ENCODE measurements at regions of chr19 and their contacts with region 1.

Region 1: DNA sequence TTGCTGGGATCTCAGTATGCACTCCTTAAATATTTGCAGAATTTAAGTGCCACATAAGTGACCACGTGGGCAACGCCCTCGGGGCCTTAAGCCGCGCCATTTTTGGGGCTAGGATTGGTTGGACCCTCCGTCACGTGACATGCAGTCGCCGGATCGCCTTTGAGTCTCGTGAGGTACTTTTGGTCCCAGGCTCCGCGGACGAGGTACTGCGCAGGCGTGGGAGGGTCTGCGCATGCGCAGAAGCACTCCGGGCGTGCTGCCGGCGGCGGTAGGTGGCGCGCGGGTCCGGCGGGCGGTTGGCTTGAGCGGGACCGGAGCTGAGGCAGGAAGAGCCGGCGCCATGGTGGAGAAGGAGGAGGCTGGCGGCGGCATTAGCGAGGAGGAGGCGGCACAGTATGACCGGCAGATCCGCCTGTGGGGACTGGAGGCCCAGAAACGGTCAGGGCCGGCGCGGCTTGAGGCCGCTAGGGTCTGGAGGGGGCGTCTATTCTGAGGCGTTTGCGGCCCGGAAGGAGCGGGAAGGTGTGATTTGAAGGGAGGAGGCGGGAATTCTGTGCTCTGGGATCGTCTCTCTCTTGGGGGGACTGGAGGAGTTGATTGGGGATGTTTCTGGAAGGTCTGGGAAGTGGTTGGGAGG is at the start of gene SAE1:
- DNase-seq: peak; percentile 93 to 97 (median 93)
- H3K4me3 ChIP-seq: peak within 1 kb of the TSS; percentile 83
- H3K27ac ChIP-seq: peak within 1 kb of the TSS; percentile 73 to 88
- H3K4me1 ChIP-seq: peaks cover 9% of the 10 kb centered on the region
- H3K27me3 ChIP-seq: no peaks in the 10 kb centered on the region
- CTCF ChIP-seq: peak; percentile 24 to 71 (median 71)
- EP300 ChIP-seq: no peak
- POLR2A ChIP-seq: peak; percentile 47
- total RNA-seq, gene SAE1: 25.5 to 64.8 (median 55.6) TPM

Region 2: DNA sequence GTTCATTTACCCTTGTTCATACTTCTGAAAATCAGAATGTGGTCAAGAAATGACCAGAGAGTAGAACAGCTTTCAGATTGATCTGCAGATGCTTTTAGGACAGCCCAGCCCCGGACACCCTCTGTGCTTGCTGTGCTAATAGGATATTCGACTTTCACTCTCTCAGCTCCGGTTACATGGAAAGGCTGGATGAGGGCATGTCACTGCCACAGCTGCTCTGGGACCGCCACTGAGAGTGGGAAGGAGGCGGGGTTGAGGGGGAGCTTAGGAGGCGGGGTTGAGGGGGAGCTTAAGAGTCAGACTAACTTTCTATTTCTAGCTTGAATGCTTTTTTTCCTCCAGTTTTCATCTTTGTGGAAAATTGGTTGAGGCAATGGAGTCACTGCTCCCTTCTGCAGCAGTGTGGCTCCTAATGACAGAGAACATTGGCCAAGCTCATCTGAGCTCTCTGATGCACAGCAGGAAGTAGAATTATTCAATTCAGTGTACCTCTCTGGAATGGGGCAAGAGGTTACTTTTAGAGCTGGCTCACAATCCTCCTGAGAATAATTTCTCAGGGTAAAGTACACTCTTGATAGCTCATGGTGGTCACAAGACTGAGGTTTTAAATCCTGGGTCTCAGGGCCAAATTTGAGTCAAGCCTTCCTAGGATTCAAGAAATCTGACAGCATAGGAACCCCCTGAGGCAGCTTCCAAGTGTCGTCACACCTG is 185.6 kb before region 1 on chr19:
- intact Hi-C with region 1: no loop called
- DNase-seq: peak; percentile 21 to 56 (median 38)
- H3K4me3 ChIP-seq: no peak overlapping the region
- H3K27ac ChIP-seq: peak overlapping the region; percentile 22 to 34
- H3K4me1 ChIP-seq: peaks cover 8% of the 10 kb centered on the region
- H3K27me3 ChIP-seq: no peaks in the 10 kb centered on the region
- CTCF ChIP-seq: no peak
- EP300 ChIP-seq: no peak
- POLR2A ChIP-seq: no peak

Region 3: DNA sequence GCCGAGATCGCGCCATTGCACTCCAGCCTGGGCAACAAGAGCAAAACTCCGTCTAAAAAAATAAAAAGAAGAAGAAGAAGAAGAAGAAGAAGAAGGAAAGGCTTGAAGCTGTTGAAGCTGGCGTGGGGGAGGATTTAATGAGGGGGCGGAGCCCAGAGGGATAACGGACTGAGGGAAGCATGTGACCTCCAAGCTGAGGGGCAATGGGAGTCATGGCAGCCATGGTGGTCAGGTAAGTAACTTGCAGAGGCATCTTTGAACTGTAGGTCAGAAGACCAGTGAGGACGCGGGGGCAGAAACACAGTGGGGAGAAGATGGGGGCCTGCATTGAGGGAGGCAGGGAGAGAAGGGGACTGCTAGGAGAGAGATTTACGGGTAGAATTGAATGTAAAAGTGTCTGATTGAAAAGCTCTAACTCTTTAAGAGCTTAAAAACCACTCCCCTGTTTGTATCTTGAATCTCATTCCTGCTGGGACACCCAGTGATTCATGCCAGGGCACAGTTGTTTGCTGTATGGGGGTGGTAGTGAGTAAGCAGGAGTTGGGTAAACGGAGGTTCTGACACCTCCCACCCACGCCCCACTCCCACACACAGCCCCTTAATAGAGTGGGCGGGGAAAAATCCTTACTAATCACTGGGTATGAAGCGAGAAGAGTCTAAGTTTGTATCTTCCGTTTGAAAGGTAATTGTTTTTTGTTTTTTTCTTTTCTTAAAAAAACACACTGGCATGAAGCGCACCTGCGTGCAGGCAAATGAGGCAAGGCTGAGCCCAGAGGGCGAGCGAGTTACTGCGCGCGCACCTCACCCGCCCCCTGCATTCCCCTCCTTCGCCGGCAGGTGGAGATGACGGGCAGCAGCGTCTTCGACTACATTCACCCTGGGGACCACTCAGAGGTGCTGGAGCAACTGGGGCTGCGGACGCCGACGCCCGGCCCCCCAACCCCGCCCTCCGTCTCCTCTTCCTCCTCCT is 95.3 kb before region 1 on chr19:
- intact Hi-C with region 1: loop called in 2 of 4 experiments (anchors 2 to 10 kb)
- DNase-seq: peak; percentile 77 to 94 (median 87)
- H3K4me3 ChIP-seq: peak overlapping the region; percentile 29
- H3K27ac ChIP-seq: no peak overlapping the region
- H3K4me1 ChIP-seq: peaks cover 2% of the 10 kb centered on the region
- H3K27me3 ChIP-seq: no peaks in the 10 kb centered on the region
- CTCF ChIP-seq: peak; percentile 74 to 94 (median 88)
- EP300 ChIP-seq: no peak
- POLR2A ChIP-seq: no peak

Region 4: DNA sequence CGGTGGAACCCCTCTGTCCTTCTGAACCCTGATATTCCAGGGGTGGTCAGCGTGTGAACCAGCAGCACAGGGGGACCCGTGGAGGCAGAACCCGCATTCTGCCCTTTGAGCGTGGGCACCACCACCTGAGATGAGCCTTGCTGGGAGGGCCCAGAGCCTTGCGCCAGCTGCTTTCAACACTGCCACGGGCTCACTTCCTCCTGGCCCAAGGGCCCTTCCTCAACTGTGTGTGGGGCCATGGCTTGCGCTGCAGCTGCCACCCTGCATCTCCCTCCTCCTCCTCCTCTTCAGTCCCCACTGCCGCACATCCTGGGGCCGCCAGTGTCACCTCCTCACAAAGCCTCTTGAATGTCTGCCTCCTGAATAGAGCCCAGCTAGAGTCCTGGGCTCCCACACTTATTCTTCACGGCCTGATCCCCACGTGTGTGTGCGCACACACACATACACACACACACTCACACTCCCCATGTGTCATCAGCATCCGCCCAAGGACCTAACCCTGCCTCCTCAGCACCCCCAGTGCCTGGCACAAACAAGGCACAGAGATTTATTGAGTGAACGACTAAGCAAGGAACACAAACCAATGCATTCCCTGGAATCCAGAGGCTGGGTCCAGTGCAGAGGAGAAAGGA is 55.4 kb before region 1 on chr19:
- intact Hi-C with region 1: loop called in 1 of 4 experiments (anchors 2 kb)
- DNase-seq: no peak
- H3K4me3 ChIP-seq: no peak overlapping the region
- H3K27ac ChIP-seq: no peak overlapping the region
- H3K4me1 ChIP-seq: no peaks in the 10 kb centered on the region
- H3K27me3 ChIP-seq: no peaks in the 10 kb centered on the region
- CTCF ChIP-seq: no peak
- EP300 ChIP-seq: no peak
- POLR2A ChIP-seq: no peak

Region 5: GRCh38 chr19:47086280-47086679 is 44.4 kb before region 1 on chr19:
- intact Hi-C with region 1: no loop called
- DNase-seq: no peak
- H3K4me3 ChIP-seq: no peak overlapping the region
- H3K27ac ChIP-seq: no peak overlapping the region
- H3K4me1 ChIP-seq: no peaks in the 10 kb centered on the region
- H3K27me3 ChIP-seq: no peaks in the 10 kb centered on the region
- CTCF ChIP-seq: no peak
- EP300 ChIP-seq: no peak
- POLR2A ChIP-seq: no peak

Measured in ovary (tissue), 10 donors.